Naive thymus-derived CD4-positive, alpha-beta T cell (primary cell): ENCODE measurements at regions of chr4 and their contacts with region 1.

Region 1: DNA sequence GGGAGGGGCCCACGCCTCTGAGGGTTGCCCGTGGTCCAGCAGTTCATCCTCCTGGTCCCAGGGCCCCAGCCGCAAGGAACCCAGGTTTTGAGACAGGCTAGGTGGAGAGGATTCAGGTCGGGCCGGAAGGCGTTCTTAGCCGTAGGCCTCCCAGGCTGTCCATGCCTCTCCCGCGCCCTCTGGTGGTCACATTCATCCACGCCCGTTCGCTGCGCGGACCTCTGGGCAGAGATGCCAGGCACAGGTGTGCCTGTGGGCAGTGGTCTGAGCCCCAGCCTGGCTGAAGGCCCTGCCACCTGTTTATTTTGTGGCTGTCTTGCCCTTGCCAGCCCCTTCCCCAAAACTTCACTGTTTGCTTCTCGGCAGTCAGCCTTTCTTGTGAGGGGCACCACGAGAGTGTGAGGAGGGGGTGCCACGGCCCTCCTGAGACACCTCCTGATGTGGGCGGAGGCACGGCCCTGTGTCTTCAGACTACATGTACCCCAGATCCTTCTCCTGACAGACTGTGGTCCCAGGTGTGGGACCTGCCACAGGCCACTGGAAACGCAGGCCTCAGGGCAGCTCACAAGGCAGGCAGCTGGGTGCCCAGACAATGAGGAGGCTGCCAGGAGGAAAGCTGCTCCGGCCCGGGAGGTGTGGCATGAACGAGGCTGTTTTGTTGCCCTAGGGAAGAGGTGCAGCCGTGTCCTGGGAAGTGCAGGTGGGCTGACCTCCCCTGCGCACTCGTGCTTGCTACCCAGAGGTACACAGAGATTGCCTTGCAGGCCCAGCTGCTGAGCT is 5.0 kb downstream of the UVSSA start:
- DNase-seq: peak; percentile 71 to 91 (median 83)
- ATAC-seq: peak; percentile 45
- H3K4me3 ChIP-seq: no peak overlapping the region
- H3K4me3 Mint-ChIP-seq: peak overlapping the region in 2 of 10 donors; percentile 50 to 53
- H3K27ac ChIP-seq: peak overlapping the region; percentile 52
- H3K27ac Mint-ChIP-seq: peak overlapping the region in 8 of 9 donors; percentile 48 to 91 (median 74)
- H3K4me1 ChIP-seq: peaks cover 10 to 24% of the 10 kb centered on the region in 2 donors
- H3K4me1 Mint-ChIP-seq: peaks cover 20 to 42% (median 29%) of the 10 kb centered on the region in 7 donors
- H3K27me3 ChIP-seq: no peaks in the 10 kb centered on the region
- H3K27me3 Mint-ChIP-seq: no peaks in the 10 kb centered on the region

Region 2: GRCh38 chr4:242121-242848 is 1109.8 kb before region 1 on chr4:
- CTCF ChIA-PET with region 1: no interaction called
- POLR2A ChIA-PET with region 1: no interaction called
- intact Hi-C with region 1: loop called in 1 of 2 experiments (anchors 10 kb)
- DNase-seq: peak; percentile 43 to 80 (median 71)
- ATAC-seq: peak; percentile 100
- H3K4me3 ChIP-seq: peak overlapping the region; percentile 72
- H3K4me3 Mint-ChIP-seq: peak overlapping the region; percentile 66 to 95 (median 90)
- H3K27ac ChIP-seq: peak overlapping the region; percentile 58
- H3K27ac Mint-ChIP-seq: peak overlapping the region; percentile 80 to 89 (median 85)
- H3K4me1 ChIP-seq: no peaks in the 10 kb centered on the region
- H3K4me1 Mint-ChIP-seq: peaks cover 10 to 13% (median 11%) of the 10 kb centered on the region in 7 donors
- H3K27me3 ChIP-seq: no peaks in the 10 kb centered on the region
- H3K27me3 Mint-ChIP-seq: no peaks in the 10 kb centered on the region

Region 3: GRCh38 chr4:663438-664428 is 688.3 kb before region 1 on chr4:
- CTCF ChIA-PET with region 1: no interaction called
- POLR2A ChIA-PET with region 1: no interaction called
- intact Hi-C with region 1: no loop called
- DNase-seq: peak; percentile 59 to 77 (median 75)
- ATAC-seq: peak; percentile 91
- H3K4me3 ChIP-seq: peak overlapping the region; percentile 86
- H3K4me3 Mint-ChIP-seq: peak overlapping the region; percentile 72 to 95 (median 86)
- H3K27ac ChIP-seq: peak overlapping the region; percentile 90
- H3K27ac Mint-ChIP-seq: peak overlapping the region; percentile 48 to 93 (median 89)
- H3K4me1 ChIP-seq: peaks cover 4 to 5% of the 10 kb centered on the region in 2 donors
- H3K4me1 Mint-ChIP-seq: peaks cover 3 to 33% (median 13%) of the 10 kb centered on the region in 7 donors
- H3K27me3 ChIP-seq: no peaks in the 10 kb centered on the region
- H3K27me3 Mint-ChIP-seq: no peaks in the 10 kb centered on the region

Region 4: GRCh38 chr4:1167247-1167949 is 184.6 kb before region 1 on chr4:
- CTCF ChIA-PET with region 1: interaction called, 5 read pairs
- POLR2A ChIA-PET with region 1: interaction called, 3 read pairs
- intact Hi-C with region 1: loop called (anchors 1 kb)
- DNase-seq: peak; percentile 74 to 89 (median 82)
- ATAC-seq: peak; percentile 92
- H3K4me3 ChIP-seq: peak overlapping the region; percentile 90
- H3K4me3 Mint-ChIP-seq: peak overlapping the region; percentile 82 to 90 (median 87)
- H3K27ac ChIP-seq: peak overlapping the region; percentile 74
- H3K27ac Mint-ChIP-seq: peak overlapping the region in 8 of 9 donors; percentile 51 to 86 (median 70)
- H3K4me1 ChIP-seq: peaks cover 3 to 17% of the 10 kb centered on the region in 2 donors
- H3K4me1 Mint-ChIP-seq: peaks cover 8 to 26% (median 18%) of the 10 kb centered on the region in 7 donors
- H3K27me3 ChIP-seq: peaks cover 0 to 9% of the 10 kb centered on the region in 2 donors
- H3K27me3 Mint-ChIP-seq: peaks cover 0 to 21% (median 6%) of the 10 kb centered on the region in 5 donors

Region 5: DNA sequence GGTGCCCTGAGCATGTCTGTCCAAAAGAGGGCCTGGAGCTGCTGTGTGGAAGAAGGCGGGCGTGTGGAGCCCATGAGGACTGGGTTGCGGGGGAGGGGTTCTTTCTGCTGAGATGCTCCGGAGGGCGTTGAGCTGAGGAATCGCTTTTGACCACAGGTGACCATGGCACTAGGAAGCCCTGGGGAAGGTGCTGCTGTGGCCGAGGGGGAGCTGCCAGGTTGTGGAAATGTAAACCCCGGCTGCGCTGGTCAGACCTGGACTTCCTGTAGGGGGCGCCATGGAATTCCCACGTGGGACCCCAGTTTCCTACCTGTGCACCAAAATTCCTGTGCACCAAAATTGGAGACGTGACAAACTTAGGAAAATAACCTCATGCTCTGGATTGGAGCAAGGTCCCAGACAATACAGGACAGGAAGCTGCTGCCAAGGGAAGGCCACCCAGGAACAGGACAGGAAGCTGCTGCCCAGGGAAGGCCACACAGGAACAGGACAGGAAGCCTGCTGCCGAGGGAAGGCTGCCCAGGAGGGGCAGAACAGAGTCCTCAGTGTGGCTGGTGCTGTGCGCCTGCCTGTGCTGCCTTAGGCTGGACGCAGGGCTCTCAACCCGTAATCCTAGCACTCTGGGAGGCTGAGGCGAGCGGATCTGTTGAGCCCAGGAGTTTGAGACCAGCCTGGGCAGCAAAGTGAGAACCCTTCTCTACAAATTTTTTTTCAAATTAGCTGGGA is 33.4 kb before region 1 on chr4:
- CTCF ChIA-PET with region 1: no interaction called
- POLR2A ChIA-PET with region 1: no interaction called
- intact Hi-C with region 1: loop called in 1 of 2 experiments (anchors 1 kb)
- DNase-seq: peak in 1 of 9 donors; percentile 15
- ATAC-seq: no peak
- H3K4me3 ChIP-seq: no peak overlapping the region
- H3K4me3 Mint-ChIP-seq: no peak overlapping the region
- H3K27ac ChIP-seq: no peak overlapping the region
- H3K27ac Mint-ChIP-seq: peak overlapping the region in 1 of 9 donors; percentile 65
- H3K4me1 ChIP-seq: peaks cover 0 to 7% of the 10 kb centered on the region in 2 donors
- H3K4me1 Mint-ChIP-seq: peaks cover 8 to 26% (median 16%) of the 10 kb centered on the region in 7 donors
- H3K27me3 ChIP-seq: no peaks in the 10 kb centered on the region
- H3K27me3 Mint-ChIP-seq: no peaks in the 10 kb centered on the region

Region 6: DNA sequence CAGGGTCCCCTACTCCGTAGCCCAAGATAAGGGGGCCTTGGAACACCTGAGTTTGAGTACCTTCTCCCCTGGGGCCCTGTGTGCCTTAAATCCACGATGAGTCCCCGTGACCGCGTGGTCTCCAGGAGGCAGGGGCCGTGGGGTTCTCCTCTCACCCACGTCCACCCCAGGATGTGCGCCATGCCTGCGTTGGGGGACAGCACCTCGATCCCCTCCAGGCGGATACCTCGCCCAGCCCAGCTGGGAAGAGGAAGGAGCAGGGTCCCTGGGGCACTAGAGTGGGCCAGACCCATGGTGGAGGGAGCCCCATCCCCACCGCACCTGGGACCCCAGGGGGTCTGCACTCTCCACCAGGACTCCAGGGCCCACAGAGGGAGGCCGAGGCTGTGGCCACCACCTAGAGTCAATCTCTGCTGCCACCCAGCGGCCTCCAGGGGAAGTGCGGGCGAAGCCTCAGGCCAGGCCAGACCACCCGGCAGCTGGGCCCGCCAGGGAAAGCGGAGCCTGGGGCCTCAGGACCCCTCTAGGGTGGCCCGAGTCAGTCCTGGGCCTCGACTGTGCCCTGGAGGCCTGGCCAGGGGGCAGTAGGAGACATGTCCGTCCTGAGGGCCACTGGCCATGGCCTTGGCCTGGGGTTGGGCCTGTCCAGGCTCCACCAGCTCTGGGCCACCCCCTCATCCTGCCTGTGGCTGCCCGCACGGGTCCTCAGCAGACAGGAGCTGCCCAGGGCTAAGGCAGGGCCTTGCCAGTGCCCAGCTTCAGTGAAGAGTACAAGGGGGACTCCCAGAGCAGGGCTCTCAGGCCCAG is 277.1 kb after region 1 on chr4:
- CTCF ChIA-PET with region 1: interaction called, 13 read pairs
- POLR2A ChIA-PET with region 1: no interaction called
- intact Hi-C with region 1: loop called in 1 of 2 experiments (anchors 1 kb)
- DNase-seq: peak; percentile 47 to 81 (median 63)
- ATAC-seq: peak; percentile 82
- H3K4me3 ChIP-seq: no peak overlapping the region
- H3K4me3 Mint-ChIP-seq: no peak overlapping the region
- H3K27ac ChIP-seq: no peak overlapping the region
- H3K27ac Mint-ChIP-seq: no peak overlapping the region
- H3K4me1 ChIP-seq: peaks cover 0 to 4% of the 10 kb centered on the region in 2 donors
- H3K4me1 Mint-ChIP-seq: no peaks in the 10 kb centered on the region
- H3K27me3 ChIP-seq: no peaks in the 10 kb centered on the region
- H3K27me3 Mint-ChIP-seq: peaks cover 0 to 6% (median 0%) of the 10 kb centered on the region in 5 donors